ENCODE measurements at regions of chr5 and their contacts with region 1.

Region 1: GRCh38 chr5:150778517-150779396 is at the start of gene SMIM3:
- DNase-seq: peak; percentile 81
- ATAC-seq: peak; percentile 63
- H3K4me3 Mint-ChIP-seq: peak within 1 kb of the TSS; percentile 99
- H3K27ac Mint-ChIP-seq: peak within 1 kb of the TSS; percentile 93
- H3K4me1 Mint-ChIP-seq: peaks cover 53% of the 10 kb centered on the region
- H3K27me3 Mint-ChIP-seq: no peaks in the 10 kb centered on the region
- CTCF ChIP-seq: peak; percentile 42
- total RNA-seq, gene SMIM3: 8.6 to 8.8 TPM

Region 2: GRCh38 chr5:150700594-150701293 is 78.0 kb before region 1 on chr5 and contains the start of gene RBM22:
- CTCF ChIA-PET with region 1: interaction called, 36 read pairs
- POLR2A ChIA-PET with region 1: interaction called, 17 read pairs
- intact Hi-C with region 1: loop called (anchors 5 kb)
- DNase-seq: peak; percentile 96
- ATAC-seq: peak; percentile 96
- H3K4me3 Mint-ChIP-seq: no peak within 1 kb of the TSS
- H3K27ac Mint-ChIP-seq: no peak within 1 kb of the TSS
- H3K4me1 Mint-ChIP-seq: peaks cover 16% of the 10 kb centered on the region
- H3K27me3 Mint-ChIP-seq: no peaks in the 10 kb centered on the region
- CTCF ChIP-seq: peak; percentile 79
- total RNA-seq, gene RBM22: 53.1 to 59.7 TPM

Region 3: DNA sequence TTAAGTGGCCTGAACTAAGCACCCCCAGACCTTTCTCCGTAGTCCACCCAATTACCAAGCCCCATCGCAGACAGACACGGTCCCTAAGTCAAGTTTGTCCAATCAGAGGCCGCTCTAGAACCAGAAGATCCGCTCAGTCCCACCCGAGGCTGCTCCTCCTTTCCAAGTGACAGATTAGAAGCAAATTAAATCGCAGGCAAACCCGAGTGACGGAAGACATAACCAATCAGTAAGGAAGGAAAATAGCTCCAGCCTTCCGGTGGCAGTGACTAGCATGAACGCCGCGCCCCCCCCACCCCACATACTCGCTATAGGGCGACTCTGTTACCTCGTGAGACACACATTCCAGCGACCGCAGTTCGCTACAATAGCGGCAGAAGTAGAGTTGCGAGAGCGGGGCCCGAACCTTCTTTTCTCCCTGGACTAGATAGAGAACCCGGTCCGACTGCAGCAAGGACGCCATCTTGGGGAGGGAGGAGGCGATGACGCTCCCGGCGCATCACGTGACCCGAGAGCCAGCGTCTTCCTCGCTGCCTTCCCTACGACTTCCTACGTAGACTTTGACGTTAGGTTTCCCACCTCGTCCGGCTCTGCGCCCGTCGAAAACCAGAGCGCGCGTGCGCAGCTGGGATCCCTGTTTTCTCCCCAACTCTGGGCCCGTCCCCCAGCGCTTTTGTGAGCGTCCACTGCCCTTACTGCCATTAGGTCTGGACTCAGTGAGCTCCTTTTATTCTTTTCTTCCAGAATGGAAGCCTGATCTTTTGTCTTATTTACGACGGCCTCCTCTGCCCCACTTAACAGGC is 20.0 kb before region 1 on chr5 and contains the start of gene DCTN4:
- CTCF ChIA-PET with region 1: interaction called, 29 read pairs
- POLR2A ChIA-PET with region 1: interaction called, 7 read pairs
- intact Hi-C with region 1: no loop called
- DNase-seq: peak; percentile 96
- ATAC-seq: peak; percentile 96
- H3K4me3 Mint-ChIP-seq: no peak within 1 kb of the TSS
- H3K27ac Mint-ChIP-seq: no peak within 1 kb of the TSS
- H3K4me1 Mint-ChIP-seq: peaks cover 35% of the 10 kb centered on the region
- H3K27me3 Mint-ChIP-seq: peaks cover 3% of the 10 kb centered on the region
- CTCF ChIP-seq: no peak
- total RNA-seq, gene DCTN4: 30.1 to 35.5 TPM

Region 4: GRCh38 chr5:150789943-150790611 is 11.3 kb after region 1 on chr5:
- CTCF ChIA-PET with region 1: interaction called, 25 read pairs
- POLR2A ChIA-PET with region 1: interaction called, 8 read pairs
- intact Hi-C with region 1: no loop called
- DNase-seq: peak; percentile 92
- ATAC-seq: peak; percentile 98
- H3K4me3 Mint-ChIP-seq: peak overlapping the region; percentile 71
- H3K27ac Mint-ChIP-seq: peak overlapping the region; percentile 92
- H3K4me1 Mint-ChIP-seq: peaks cover 57% of the 10 kb centered on the region
- H3K27me3 Mint-ChIP-seq: no peaks in the 10 kb centered on the region
- CTCF ChIP-seq: no peak

Region 5: GRCh38 chr5:150801117-150801927 is 22.6 kb after region 1 on chr5:
- CTCF ChIA-PET with region 1: interaction called, 14 read pairs
- POLR2A ChIA-PET with region 1: interaction called, 5 read pairs
- intact Hi-C with region 1: no loop called
- DNase-seq: no peak
- ATAC-seq: peak; percentile 64
- H3K4me3 Mint-ChIP-seq: no peak overlapping the region
- H3K27ac Mint-ChIP-seq: no peak overlapping the region
- H3K4me1 Mint-ChIP-seq: peaks cover 15% of the 10 kb centered on the region
- H3K27me3 Mint-ChIP-seq: peaks cover 2% of the 10 kb centered on the region
- CTCF ChIP-seq: peak; percentile 81

Region 6: GRCh38 chr5:150853561-150853960 is 74.8 kb after region 1 on chr5:
- CTCF ChIA-PET with region 1: no interaction called
- POLR2A ChIA-PET with region 1: no interaction called
- intact Hi-C with region 1: no loop called
- DNase-seq: no peak
- ATAC-seq: no peak
- H3K4me3 Mint-ChIP-seq: peak overlapping the region; percentile 34
- H3K27ac Mint-ChIP-seq: peak overlapping the region; percentile 5
- H3K4me1 Mint-ChIP-seq: peaks cover 5% of the 10 kb centered on the region
- H3K27me3 Mint-ChIP-seq: no peaks in the 10 kb centered on the region
- CTCF ChIP-seq: no peak

Measured in activated CD8-positive, alpha-beta T cell treated with anti-CD3 and anti-CD28 coated beads for 36 hours (primary cell).